ENCODE measurements at regions of chrX and their contacts with region 1.

Region 1: GRCh38 chrX:49878834-49879659 is at the start of gene USP27X:
- DNase-seq: peak; percentile 74 to 85 (median 80)
- ATAC-seq: peak; percentile 88 to 94 (median 93)
- H3K4me3 ChIP-seq: peak within 1 kb of the TSS; percentile 26 to 85 (median 64)
- H3K27ac ChIP-seq: peak within 1 kb of the TSS; percentile 65 to 89 (median 80)
- H3K4me1 ChIP-seq: peaks cover 0 to 8% (median 0%) of the 10 kb centered on the region in 12 donors
- H3K27me3 ChIP-seq: peaks cover 0 to 5% (median 0%) of the 10 kb centered on the region in 9 donors
- CTCF ChIP-seq: peak; percentile 27 to 69 (median 48)
- POLR2A ChIP-seq: peak in 1 of 2 donors; percentile 51
- total RNA-seq, gene USP27X: 0.67 to 4.3 (median 2.2) TPM

Region 2: DNA sequence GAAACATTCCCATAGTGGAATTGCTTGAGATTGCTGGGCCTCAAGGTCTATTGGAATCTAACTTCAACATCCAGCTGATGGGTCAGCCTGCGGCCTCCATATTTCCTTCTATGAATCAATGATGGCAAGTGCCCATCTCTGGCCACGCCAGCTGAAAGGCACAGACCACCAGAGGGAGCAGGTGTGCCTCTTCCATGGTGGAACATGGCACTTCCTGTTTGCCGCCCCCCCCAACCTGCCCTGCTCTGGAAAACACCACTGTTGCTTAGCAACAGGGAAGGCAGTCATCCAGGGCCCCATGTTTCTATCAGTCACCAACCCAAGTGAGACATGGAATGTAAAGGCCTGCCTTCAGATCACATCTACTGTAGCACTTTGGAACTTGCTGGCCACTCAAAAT is 38.4 kb before region 1 on chrX:
- intact Hi-C with region 1: loop called in 1 of 10 experiments (anchors 5 kb)
- DNase-seq: peak in 4 of 5 donors; percentile 35 to 74 (median 55)
- ATAC-seq: peak; percentile 70 to 90 (median 84)
- H3K4me3 ChIP-seq: no peak overlapping the region
- H3K27ac ChIP-seq: no peak overlapping the region
- H3K4me1 ChIP-seq: no peaks in the 10 kb centered on the region
- H3K27me3 ChIP-seq: peaks cover 0 to 23% (median 0%) of the 10 kb centered on the region in 9 donors
- CTCF ChIP-seq: peak in 10 of 12 donors; percentile 5 to 50 (median 27)
- POLR2A ChIP-seq: no peak

Measured in heart left ventricle (tissue), 16 donors.